Activated naive CD4-positive, alpha-beta T cell treated with anti-CD3 and anti-CD28 coated beads for 36 hours (primary cell): ENCODE measurements at regions of chr19 and their contacts with region 1.

Region 1: GRCh38 chr19:53365134-53365898 is at the start of gene ZNF525:
- DNase-seq: peak; percentile 97
- H3K4me3 Mint-ChIP-seq: peak within 1 kb of the TSS; percentile 91
- H3K27ac Mint-ChIP-seq: peak within 1 kb of the TSS; percentile 89
- H3K4me1 Mint-ChIP-seq: peaks cover 17% of the 10 kb centered on the region
- H3K27me3 Mint-ChIP-seq: no peaks in the 10 kb centered on the region
- total RNA-seq, gene ZNF525: 16.2 to 17.4 TPM

Region 2: GRCh38 chr19:53333463-53334449 is 31.6 kb before region 1 on chr19 and contains the start of gene ZNF845:
- CTCF ChIA-PET with region 1: no interaction called
- intact Hi-C with region 1: loop called (anchors 1 kb)
- DNase-seq: peak; percentile 97
- H3K4me3 Mint-ChIP-seq: peak within 1 kb of the TSS; percentile 97
- H3K27ac Mint-ChIP-seq: peak within 1 kb of the TSS; percentile 87
- H3K4me1 Mint-ChIP-seq: peaks cover 13% of the 10 kb centered on the region
- H3K27me3 Mint-ChIP-seq: peaks cover 6% of the 10 kb centered on the region
- total RNA-seq, gene ZNF845: 4.3 to 4.5 TPM

Region 3: GRCh38 chr19:53394974-53395839 is 29.9 kb after region 1 on chr19 and contains the start of gene ZNF765:
- CTCF ChIA-PET with region 1: interaction called, 3 read pairs
- intact Hi-C with region 1: loop called (anchors 1 kb)
- DNase-seq: peak; percentile 97
- H3K4me3 Mint-ChIP-seq: peak within 1 kb of the TSS; percentile 88
- H3K27ac Mint-ChIP-seq: peak within 1 kb of the TSS; percentile 90
- H3K4me1 Mint-ChIP-seq: peaks cover 27% of the 10 kb centered on the region
- H3K27me3 Mint-ChIP-seq: no peaks in the 10 kb centered on the region
- total RNA-seq, gene ZNF765: 7.9 to 8.0 TPM

Region 4: GRCh38 chr19:53431399-53432087 is 66.2 kb after region 1 on chr19 and contains the start of gene ZNF761:
- CTCF ChIA-PET with region 1: no interaction called
- intact Hi-C with region 1: loop called (anchors 2 kb)
- DNase-seq: peak; percentile 97
- H3K4me3 Mint-ChIP-seq: peak within 1 kb of the TSS; percentile 83
- H3K27ac Mint-ChIP-seq: peak within 1 kb of the TSS; percentile 88
- H3K4me1 Mint-ChIP-seq: peaks cover 21% of the 10 kb centered on the region
- H3K27me3 Mint-ChIP-seq: no peaks in the 10 kb centered on the region
- total RNA-seq, gene ZNF761: 8.7 to 10.0 TPM